CD14-positive monocyte (primary cell): ENCODE measurements at regions of chr12 and their contacts with region 1.

Region 1: DNA sequence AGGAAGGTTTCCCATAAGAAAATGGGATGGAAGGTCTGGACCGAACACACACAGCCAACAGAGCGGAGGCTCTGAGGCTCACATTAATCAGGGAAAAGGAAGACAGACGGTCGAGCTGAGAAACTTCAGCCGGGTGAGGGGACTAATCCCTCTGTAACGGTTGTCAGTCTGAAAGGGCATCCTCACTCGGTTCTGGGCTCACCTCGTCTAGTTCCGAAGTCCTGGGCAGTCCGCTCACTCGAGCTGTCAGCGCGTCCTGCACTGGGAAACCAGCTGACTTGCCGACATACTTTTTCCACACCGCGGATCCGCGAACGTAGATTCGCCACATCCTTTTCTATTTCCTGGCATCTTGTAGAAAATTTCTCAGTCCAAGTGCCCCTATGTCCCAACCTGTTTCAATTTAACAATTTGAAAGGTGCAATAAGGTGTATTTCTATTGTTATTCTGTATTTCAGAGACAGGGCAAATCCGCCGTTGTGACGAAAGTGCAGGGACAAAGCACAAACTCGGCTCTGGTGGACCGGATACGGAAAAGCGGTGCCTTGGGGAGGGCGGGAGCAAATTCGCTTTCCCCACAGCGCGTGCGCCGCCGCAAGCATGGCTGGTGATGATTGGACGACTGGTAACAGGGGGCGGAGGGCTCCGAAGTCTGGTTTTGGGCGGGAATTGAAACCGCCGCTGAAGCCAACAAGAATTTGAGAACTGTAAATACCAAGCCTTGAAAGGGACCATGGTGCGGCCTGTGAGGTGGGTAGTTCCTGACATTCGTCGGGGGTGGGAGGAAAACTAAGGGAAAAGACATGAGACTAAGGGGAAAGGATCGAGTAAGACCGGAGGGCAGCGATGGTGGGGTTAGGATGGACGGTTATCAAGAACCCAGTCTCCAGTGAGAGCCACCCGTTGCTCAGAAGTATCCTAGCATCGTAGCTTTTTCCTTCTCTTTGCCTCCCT is at the start of gene RAD51AP1:
- DNase-seq: peak; percentile 92 to 97 (median 97)
- H3K4me3 ChIP-seq: peak within 1 kb of the TSS; percentile 68 to 98 (median 81)
- H3K4me3 Mint-ChIP-seq: peak within 1 kb of the TSS; percentile 89 to 94
- H3K27ac ChIP-seq: peak within 1 kb of the TSS; percentile 43 to 98
- H3K27ac Mint-ChIP-seq: peak within 1 kb of the TSS; percentile 94 to 99 (median 98)
- H3K4me1 ChIP-seq: peaks cover 10 to 24% of the 10 kb centered on the region in 2 donors
- H3K4me1 Mint-ChIP-seq: peaks cover 23% of the 10 kb centered on the region
- H3K27me3 ChIP-seq: no peaks in the 10 kb centered on the region
- H3K27me3 Mint-ChIP-seq: no peaks in the 10 kb centered on the region
- CTCF ChIP-seq: no peak
- polyA plus RNA-seq, gene RAD51AP1: 1.0 to 1.4 (median 1.3) TPM

Region 2: DNA sequence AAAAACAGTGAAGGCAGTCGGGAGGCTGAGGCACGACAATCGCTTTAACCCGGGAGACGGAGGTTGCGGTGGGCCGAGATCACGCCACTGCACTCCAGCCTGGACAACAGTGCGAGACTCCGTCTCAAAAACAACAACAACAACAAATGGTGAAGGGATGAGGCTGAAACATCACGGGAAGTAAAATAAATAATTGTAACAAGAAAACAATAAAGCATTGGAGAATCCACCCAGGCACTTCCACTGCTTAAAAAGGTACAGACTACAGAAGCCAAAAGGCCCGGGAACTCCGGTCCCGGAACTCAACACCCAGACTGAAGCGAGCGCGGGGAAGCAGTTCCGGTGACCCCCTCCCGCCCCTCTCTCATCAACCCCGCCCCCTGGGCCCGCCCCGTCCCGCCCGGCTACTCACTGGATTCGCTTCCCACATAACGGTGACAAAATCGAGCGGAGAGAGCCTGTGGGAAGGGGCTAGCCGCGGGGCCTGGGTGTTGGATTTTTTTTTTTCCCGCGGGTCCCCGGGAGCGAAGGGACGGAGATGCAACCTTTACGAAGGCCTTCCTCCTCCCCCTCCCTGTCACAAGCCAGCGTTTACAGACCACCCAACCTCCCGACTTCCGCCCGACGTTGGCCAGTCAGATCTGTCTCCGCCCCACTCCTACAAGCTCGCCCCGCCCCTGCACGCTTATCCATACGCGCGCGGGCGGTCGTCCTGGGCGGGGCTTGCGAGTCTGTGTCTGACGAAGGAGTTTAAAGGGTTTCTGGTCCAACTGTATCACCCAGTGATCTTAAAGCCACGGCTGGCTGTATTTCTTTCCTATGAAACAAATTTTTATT is 665.5 kb before region 1 on chr12 and contains the start of gene PARP11:
- intact Hi-C with region 1: loop called (anchors 10 kb)
- DNase-seq: peak; percentile 92 to 93 (median 92)
- H3K4me3 ChIP-seq: peak within 1 kb of the TSS; percentile 75 to 97 (median 97)
- H3K4me3 Mint-ChIP-seq: peak within 1 kb of the TSS; percentile 86 to 96
- H3K27ac ChIP-seq: peak within 1 kb of the TSS; percentile 97 to 98
- H3K27ac Mint-ChIP-seq: peak within 1 kb of the TSS; percentile 92 to 98 (median 97)
- H3K4me1 ChIP-seq: peaks cover 27 to 41% of the 10 kb centered on the region in 2 donors
- H3K4me1 Mint-ChIP-seq: peaks cover 37% of the 10 kb centered on the region
- H3K27me3 ChIP-seq: no peaks in the 10 kb centered on the region
- H3K27me3 Mint-ChIP-seq: peaks cover 0 to 6% (median 0%) of the 10 kb centered on the region in 3 donors
- CTCF ChIP-seq: no peak
- polyA plus RNA-seq, gene PARP11: 3.2 to 6.2 (median 5.4) TPM

Region 3: DNA sequence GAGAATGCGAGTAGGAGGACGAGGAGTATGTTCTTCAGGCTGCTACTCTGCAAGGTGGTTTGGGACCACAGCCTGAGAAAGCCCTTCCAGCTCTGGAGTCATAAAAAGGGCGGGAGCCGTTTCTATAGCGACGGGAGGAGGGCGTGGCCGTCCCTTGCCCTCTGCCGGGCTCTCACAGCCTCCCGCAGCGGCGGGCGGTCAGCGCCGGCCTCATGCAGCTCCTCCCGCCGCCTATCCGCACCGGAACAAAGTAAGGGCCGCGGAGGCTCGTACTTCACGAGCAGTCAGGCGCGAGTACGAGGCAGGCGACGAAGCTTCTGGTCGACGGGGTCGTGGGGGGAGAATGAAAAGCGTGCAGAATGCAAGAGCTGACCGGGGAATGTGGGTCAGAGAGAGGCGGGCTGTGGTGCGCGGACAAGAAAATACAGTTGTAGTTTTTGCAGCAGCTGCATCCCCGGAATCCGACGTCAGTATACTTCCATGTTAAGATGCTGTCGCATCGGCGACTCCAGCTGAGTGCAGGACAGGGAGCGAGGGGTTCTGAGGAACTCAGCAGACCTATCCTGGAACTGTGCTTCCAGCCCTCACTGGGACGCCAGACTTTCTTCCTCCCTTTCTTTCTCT is 23.7 kb after region 1 on chr12 and contains the start of gene DYRK4:
- intact Hi-C with region 1: loop called in 1 of 2 experiments (anchors 2 kb)
- DNase-seq: peak; percentile 67 to 73 (median 70)
- H3K4me3 ChIP-seq: peak within 1 kb of the TSS; percentile 31 to 74 (median 47)
- H3K4me3 Mint-ChIP-seq: peak within 1 kb of the TSS; percentile 91 to 92
- H3K27ac ChIP-seq: peak within 1 kb of the TSS; percentile 50 to 56
- H3K27ac Mint-ChIP-seq: peak within 1 kb of the TSS; percentile 53 to 93 (median 80)
- H3K4me1 ChIP-seq: peaks cover 57 to 62% of the 10 kb centered on the region in 2 donors
- H3K4me1 Mint-ChIP-seq: peaks cover 58% of the 10 kb centered on the region
- H3K27me3 ChIP-seq: no peaks in the 10 kb centered on the region
- H3K27me3 Mint-ChIP-seq: peaks cover 0 to 6% (median 0%) of the 10 kb centered on the region in 3 donors
- CTCF ChIP-seq: no peak
- polyA plus RNA-seq, gene DYRK4: 17.4 to 26.9 (median 22.4) TPM